ENCODE measurements at regions of chr5 and their contacts with region 1.

Region 1: GRCh38 chr5:57137401-57137800 is 36.5 kb upstream of the GPBP1 start:
- DNase-seq: no peak
- H3K4me3 ChIP-seq: no peak overlapping the region
- H3K4me3 Mint-ChIP-seq: no peak overlapping the region
- H3K27ac Mint-ChIP-seq: no peak overlapping the region
- H3K4me1 ChIP-seq: no peaks in the 10 kb centered on the region
- H3K4me1 Mint-ChIP-seq: no peaks in the 10 kb centered on the region
- H3K27me3 ChIP-seq: no peaks in the 10 kb centered on the region
- H3K27me3 Mint-ChIP-seq: no peaks in the 10 kb centered on the region
- CTCF ChIP-seq: no peak

Region 2: GRCh38 chr5:56900858-56901578 is 236.4 kb before region 1 on chr5:
- CTCF ChIA-PET with region 1: interaction called, 29 read pairs
- POLR2A ChIA-PET with region 1: no interaction called
- intact Hi-C with region 1: loop called (anchors 1 kb)
- DNase-seq: peak in 1 of 2 experiments; percentile 71
- H3K4me3 ChIP-seq: no peak overlapping the region
- H3K4me3 Mint-ChIP-seq: no peak overlapping the region
- H3K27ac Mint-ChIP-seq: no peak overlapping the region
- H3K4me1 ChIP-seq: peaks cover 5% of the 10 kb centered on the region; the same call in 1 of the 2 replicates
- H3K4me1 Mint-ChIP-seq: no peaks in the 10 kb centered on the region
- H3K27me3 ChIP-seq: no peaks in the 10 kb centered on the region
- H3K27me3 Mint-ChIP-seq: no peaks in the 10 kb centered on the region
- CTCF ChIP-seq: peak; percentile 66 to 80

Region 3: DNA sequence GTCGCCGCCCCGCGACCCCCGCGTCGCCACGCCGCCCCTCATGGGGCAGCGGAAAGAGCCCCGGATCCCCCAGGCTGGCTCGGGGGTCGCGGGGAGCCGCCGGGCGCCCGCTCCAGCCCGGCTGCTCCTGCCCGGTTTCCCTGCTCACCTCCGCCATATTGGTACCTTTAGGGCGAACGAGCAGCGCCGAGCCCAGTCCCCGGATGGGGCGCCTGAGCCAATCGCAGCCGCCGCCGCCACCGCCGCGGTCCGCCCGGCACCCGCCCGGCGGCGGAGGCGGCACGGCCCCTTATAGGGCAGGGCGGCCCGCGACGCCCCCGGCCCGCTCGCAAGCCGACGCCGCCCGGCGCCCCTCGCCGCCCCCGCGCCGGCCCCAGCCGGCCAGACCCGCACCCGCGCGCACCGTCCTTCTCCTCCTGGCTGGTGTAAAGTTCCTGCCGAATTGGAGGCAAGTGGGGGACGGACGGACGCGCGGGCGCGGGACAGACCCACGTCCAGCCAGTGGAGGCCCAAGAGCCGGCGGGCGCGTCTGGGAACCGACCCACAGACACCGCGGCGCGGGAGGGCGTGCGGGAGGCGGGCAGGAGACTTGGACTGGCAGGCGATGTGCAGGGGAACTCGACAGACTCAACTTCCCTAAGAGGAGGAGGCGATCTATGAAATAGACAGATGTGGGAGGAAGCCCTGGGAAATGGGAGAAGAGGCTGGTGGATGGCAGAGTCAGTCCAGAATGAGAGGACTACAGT is 185.3 kb before region 1 on chr5 and contains the start of gene MIER3:
- CTCF ChIA-PET with region 1: interaction called, 10 read pairs
- POLR2A ChIA-PET with region 1: interaction called, 4 read pairs
- intact Hi-C with region 1: no loop called
- DNase-seq: peak; percentile 81 to 90
- H3K4me3 ChIP-seq: peak within 1 kb of the TSS; percentile 94
- H3K4me3 Mint-ChIP-seq: peak within 1 kb of the TSS; percentile 73
- H3K27ac Mint-ChIP-seq: peak within 1 kb of the TSS; percentile 72
- H3K4me1 ChIP-seq: peaks cover 25% of the 10 kb centered on the region
- H3K4me1 Mint-ChIP-seq: peaks cover 11% of the 10 kb centered on the region
- H3K27me3 ChIP-seq: no peaks in the 10 kb centered on the region
- H3K27me3 Mint-ChIP-seq: no peaks in the 10 kb centered on the region
- CTCF ChIP-seq: no peak
- total RNA-seq, gene MIER3: 52.7 and 54.0 TPM in 2 replicates

Region 4: DNA sequence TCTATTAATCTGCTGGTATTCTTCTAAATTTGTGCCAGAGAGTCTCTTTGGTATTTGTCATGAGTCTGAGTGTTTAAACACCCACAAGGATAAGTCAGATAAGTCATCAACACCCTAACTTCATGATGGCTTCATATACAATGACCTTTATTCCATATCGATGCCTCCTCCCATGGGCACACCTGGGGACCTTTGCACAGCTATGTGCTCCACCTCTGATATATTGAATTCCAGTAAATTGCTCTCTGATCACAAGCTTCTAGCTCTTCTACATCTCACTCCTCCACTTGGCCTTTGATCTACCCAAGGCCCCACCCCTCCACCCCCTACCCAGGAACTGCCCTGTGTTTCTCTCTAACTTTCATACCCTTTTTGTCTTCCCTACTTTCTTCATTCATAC is 82.7 kb before region 1 on chr5:
- CTCF ChIA-PET with region 1: no interaction called
- POLR2A ChIA-PET with region 1: no interaction called
- intact Hi-C with region 1: no loop called
- DNase-seq: no peak
- H3K4me3 ChIP-seq: no peak overlapping the region
- H3K4me3 Mint-ChIP-seq: no peak overlapping the region
- H3K27ac Mint-ChIP-seq: no peak overlapping the region
- H3K4me1 ChIP-seq: 0 out of 2 replicates have a peak, but pooled peaks cover 12% of the 10 kb centered on the region
- H3K4me1 Mint-ChIP-seq: no peaks in the 10 kb centered on the region
- H3K27me3 ChIP-seq: no peaks in the 10 kb centered on the region
- H3K27me3 Mint-ChIP-seq: no peaks in the 10 kb centered on the region
- CTCF ChIP-seq: no peak

Region 5: GRCh38 chr5:57082441-57083067 is 54.8 kb before region 1 on chr5:
- CTCF ChIA-PET with region 1: no interaction called
- POLR2A ChIA-PET with region 1: no interaction called
- intact Hi-C with region 1: loop called (anchors 1 kb)
- DNase-seq: peak in 1 of 2 experiments; percentile 46
- H3K4me3 ChIP-seq: no peak overlapping the region
- H3K4me3 Mint-ChIP-seq: no peak overlapping the region
- H3K27ac Mint-ChIP-seq: no peak overlapping the region
- H3K4me1 ChIP-seq: no peaks in the 10 kb centered on the region
- H3K4me1 Mint-ChIP-seq: no peaks in the 10 kb centered on the region
- H3K27me3 ChIP-seq: no peaks in the 10 kb centered on the region
- H3K27me3 Mint-ChIP-seq: no peaks in the 10 kb centered on the region
- CTCF ChIP-seq: peak; percentile 55 to 73

Region 6: GRCh38 chr5:57221049-57221568 is 83.7 kb after region 1 on chr5:
- CTCF ChIA-PET with region 1: no interaction called
- POLR2A ChIA-PET with region 1: no interaction called
- intact Hi-C with region 1: loop called (anchors 1 kb)
- DNase-seq: peak in 1 of 2 experiments; percentile 69
- H3K4me3 ChIP-seq: no peak overlapping the region
- H3K4me3 Mint-ChIP-seq: no peak overlapping the region
- H3K27ac Mint-ChIP-seq: no peak overlapping the region
- H3K4me1 ChIP-seq: peaks cover 6% of the 10 kb centered on the region; the same call in 1 of the 2 replicates
- H3K4me1 Mint-ChIP-seq: no peaks in the 10 kb centered on the region
- H3K27me3 ChIP-seq: no peaks in the 10 kb centered on the region
- H3K27me3 Mint-ChIP-seq: no peaks in the 10 kb centered on the region
- CTCF ChIP-seq: peak; percentile 66 to 84

Region 7: DNA sequence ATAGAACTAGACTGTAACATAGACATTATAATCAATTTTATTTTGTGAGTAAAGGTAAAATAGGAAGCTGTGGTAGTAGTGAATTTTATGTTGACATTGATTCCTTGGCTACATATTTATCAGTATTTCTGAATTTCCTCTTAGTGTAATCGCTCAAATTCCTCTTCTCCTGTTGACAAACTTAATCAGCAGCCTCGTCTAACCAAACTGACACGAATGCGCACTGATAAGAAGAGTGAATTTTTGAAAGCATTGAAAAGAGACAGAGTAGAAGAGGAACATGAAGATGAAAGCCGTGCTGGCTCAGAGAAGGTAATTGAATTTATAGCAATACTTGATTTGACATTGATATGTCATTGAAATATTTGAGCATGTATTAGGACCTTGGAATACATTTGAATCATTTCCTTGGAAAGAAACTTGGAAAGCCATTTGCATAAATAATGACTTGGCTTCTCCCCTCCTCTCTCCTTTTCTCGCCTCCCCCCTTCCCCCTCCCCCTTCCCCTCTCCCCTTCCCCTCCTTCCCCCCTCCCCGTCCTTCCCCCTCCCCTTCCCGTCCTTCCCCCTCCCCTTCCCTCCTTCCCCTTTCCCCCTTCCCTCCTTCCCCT is 112.0 kb after region 1 on chr5:
- CTCF ChIA-PET with region 1: no interaction called
- POLR2A ChIA-PET with region 1: no interaction called
- intact Hi-C with region 1: no loop called
- DNase-seq: no peak
- H3K4me3 ChIP-seq: no peak overlapping the region
- H3K4me3 Mint-ChIP-seq: no peak overlapping the region
- H3K27ac Mint-ChIP-seq: no peak overlapping the region
- H3K4me1 ChIP-seq: no peaks in the 10 kb centered on the region; the same call in 1 of the 2 replicates
- H3K4me1 Mint-ChIP-seq: no peaks in the 10 kb centered on the region
- H3K27me3 ChIP-seq: no peaks in the 10 kb centered on the region
- H3K27me3 Mint-ChIP-seq: no peaks in the 10 kb centered on the region
- CTCF ChIP-seq: no peak

Region 8: DNA sequence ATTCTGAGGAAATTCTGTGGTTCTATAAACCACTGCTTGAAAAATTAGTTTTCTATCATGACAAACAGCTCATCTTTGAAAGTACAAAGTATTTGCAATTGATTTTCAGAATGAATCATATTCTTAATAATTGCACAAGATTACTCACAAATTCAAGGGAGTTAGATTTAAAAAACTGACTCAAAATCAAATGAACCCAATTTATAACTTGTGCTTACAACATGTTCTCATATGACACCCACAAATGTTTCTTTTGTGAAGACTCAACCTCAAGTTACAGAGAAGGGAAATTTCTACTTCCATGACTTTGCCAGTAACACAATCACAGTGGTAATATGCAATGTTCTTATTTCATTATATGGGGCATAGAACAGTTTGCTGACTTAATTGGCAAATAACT is 617.2 kb after region 1 on chr5:
- CTCF ChIA-PET with region 1: no interaction called
- POLR2A ChIA-PET with region 1: no interaction called
- intact Hi-C with region 1: no loop called
- DNase-seq: no peak
- H3K4me3 ChIP-seq: no peak overlapping the region
- H3K4me3 Mint-ChIP-seq: no peak overlapping the region
- H3K27ac Mint-ChIP-seq: no peak overlapping the region
- H3K4me1 ChIP-seq: no peaks in the 10 kb centered on the region
- H3K4me1 Mint-ChIP-seq: no peaks in the 10 kb centered on the region
- H3K27me3 ChIP-seq: no peaks in the 10 kb centered on the region
- H3K27me3 Mint-ChIP-seq: no peaks in the 10 kb centered on the region
- CTCF ChIP-seq: no peak